T-cell (primary cell): ENCODE measurements at regions of chr7 and their contacts with region 1.

Region 1: GRCh38 chr7:43582503-43583423 is at the start of gene STK17A:
- DNase-seq: peak; percentile 87 to 98 (median 93)
- ATAC-seq: peak; percentile 70 to 87 (median 80)
- H3K4me3 ChIP-seq: peak within 1 kb of the TSS; percentile 94 to 96
- H3K4me3 Mint-ChIP-seq: peak within 1 kb of the TSS; percentile 96 to 99 (median 98)
- H3K27ac ChIP-seq: peak within 1 kb of the TSS; percentile 95
- H3K27ac Mint-ChIP-seq: peak within 1 kb of the TSS; percentile 95 to 98
- H3K4me1 ChIP-seq: peaks cover 4 to 12% of the 10 kb centered on the region in 2 experiments
- H3K4me1 Mint-ChIP-seq: peaks cover 14 to 40% (median 26%) of the 10 kb centered on the region in 3 donors
- H3K27me3 ChIP-seq: no peaks in the 10 kb centered on the region
- H3K27me3 Mint-ChIP-seq: peaks cover 0 to 5% of the 10 kb centered on the region in 2 donors
- total RNA-seq, gene STK17A: 101 to 120 (median 117) TPM

Region 2: GRCh38 chr7:43449577-43449976 is 133.2 kb before region 1 on chr7:
- CTCF ChIA-PET with region 1: no interaction called
- POLR2A ChIA-PET with region 1: no interaction called
- DNase-seq: no peak
- ATAC-seq: no peak
- H3K4me3 ChIP-seq: no peak overlapping the region
- H3K4me3 Mint-ChIP-seq: no peak overlapping the region
- H3K27ac ChIP-seq: no peak overlapping the region
- H3K27ac Mint-ChIP-seq: no peak overlapping the region
- H3K4me1 ChIP-seq: no peaks in the 10 kb centered on the region
- H3K4me1 Mint-ChIP-seq: no peaks in the 10 kb centered on the region
- H3K27me3 ChIP-seq: peaks cover 0 to 4% of the 10 kb centered on the region in 2 experiments
- H3K27me3 Mint-ChIP-seq: peaks cover 3 to 5% of the 10 kb centered on the region in 2 donors

Region 3: DNA sequence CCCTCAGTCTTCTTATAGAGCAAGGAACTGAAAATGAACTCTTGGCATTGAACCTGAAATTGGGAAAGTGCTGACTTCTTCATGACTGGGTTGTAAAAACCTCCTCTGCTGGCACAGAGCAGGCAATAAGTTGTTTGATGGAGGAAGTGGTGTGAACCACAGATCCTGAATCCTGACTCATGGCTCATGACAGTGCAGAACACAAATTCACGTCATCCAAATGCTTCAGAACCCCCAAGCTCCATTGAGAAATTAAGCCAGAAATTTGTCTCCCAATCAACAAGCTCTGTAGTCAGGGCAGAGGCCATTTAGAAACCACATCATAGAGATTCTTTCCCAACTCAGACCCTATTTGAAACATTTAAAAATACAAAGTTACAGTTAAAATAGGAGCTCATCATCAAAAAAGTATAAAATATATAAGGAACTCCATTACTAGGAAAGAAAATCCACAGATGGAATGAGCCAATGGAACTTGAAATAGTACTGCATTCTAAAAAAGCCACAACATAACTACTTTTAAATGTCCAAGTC is 10.2 kb before region 1 on chr7:
- CTCF ChIA-PET with region 1: interaction called, 4 to 14 read pairs
- POLR2A ChIA-PET with region 1: interaction called in 1 of 2 experiments, 7 read pairs
- DNase-seq: peak in 4 of 35 experiments; percentile 10 to 35 (median 24)
- ATAC-seq: peak; percentile 74 to 89 (median 80)
- H3K4me3 ChIP-seq: no peak overlapping the region
- H3K4me3 Mint-ChIP-seq: no peak overlapping the region
- H3K27ac ChIP-seq: no peak overlapping the region
- H3K27ac Mint-ChIP-seq: peak overlapping the region in 1 of 2 donors; percentile 8
- H3K4me1 ChIP-seq: peaks cover 0 to 2% of the 10 kb centered on the region in 2 experiments
- H3K4me1 Mint-ChIP-seq: peaks cover 2 to 7% (median 6%) of the 10 kb centered on the region in 3 donors
- H3K27me3 ChIP-seq: no peaks in the 10 kb centered on the region
- H3K27me3 Mint-ChIP-seq: no peaks in the 10 kb centered on the region

Region 4: DNA sequence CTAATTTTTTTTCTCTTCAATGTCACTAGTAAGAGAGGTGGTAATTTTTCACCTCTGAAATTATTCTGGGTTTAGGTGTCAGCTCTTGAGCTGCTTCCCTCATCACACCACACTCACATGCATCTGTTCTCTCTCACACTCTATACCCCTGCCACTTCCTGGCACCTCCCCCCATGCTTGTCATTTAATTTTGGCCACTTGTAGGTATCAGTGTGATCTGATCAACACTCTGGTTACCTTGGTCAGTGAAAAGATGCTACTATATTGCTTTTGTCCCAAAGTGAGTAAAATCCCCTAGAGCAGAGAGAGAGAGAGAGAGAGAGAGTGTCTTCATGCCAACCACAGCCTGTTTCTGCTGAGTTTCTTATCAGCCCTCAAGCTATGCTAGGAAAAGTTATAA is 42.7 kb after region 1 on chr7:
- CTCF ChIA-PET with region 1: interaction called, 5 to 63 read pairs
- POLR2A ChIA-PET with region 1: interaction called, 9 to 25 read pairs
- DNase-seq: peak in 33 of 35 experiments; percentile 33 to 83 (median 69)
- ATAC-seq: peak; percentile 64 to 74 (median 73)
- H3K4me3 ChIP-seq: no peak overlapping the region
- H3K4me3 Mint-ChIP-seq: peak overlapping the region; percentile 29 to 55 (median 52)
- H3K27ac ChIP-seq: peak overlapping the region; percentile 76
- H3K27ac Mint-ChIP-seq: peak overlapping the region; percentile 85 to 87
- H3K4me1 ChIP-seq: peaks cover 45 to 82% of the 10 kb centered on the region in 2 experiments
- H3K4me1 Mint-ChIP-seq: peaks cover 62 to 91% (median 91%) of the 10 kb centered on the region in 3 donors
- H3K27me3 ChIP-seq: no peaks in the 10 kb centered on the region
- H3K27me3 Mint-ChIP-seq: no peaks in the 10 kb centered on the region

Region 5: GRCh38 chr7:43669286-43670081 is 86.7 kb after region 1 on chr7:
- CTCF ChIA-PET with region 1: interaction called, 7 to 23 read pairs
- POLR2A ChIA-PET with region 1: interaction called, 7 to 15 read pairs
- DNase-seq: peak in 34 of 35 experiments; percentile 48 to 82 (median 64)
- ATAC-seq: peak; percentile 68 to 87 (median 74)
- H3K4me3 ChIP-seq: peak overlapping the region in 1 of 2 donors; percentile 22
- H3K4me3 Mint-ChIP-seq: peak overlapping the region; percentile 56 to 77 (median 73)
- H3K27ac ChIP-seq: peak overlapping the region; percentile 79
- H3K27ac Mint-ChIP-seq: peak overlapping the region; percentile 87 to 95
- H3K4me1 ChIP-seq: peaks cover 18 to 20% of the 10 kb centered on the region in 2 experiments
- H3K4me1 Mint-ChIP-seq: peaks cover 83 to 85% (median 85%) of the 10 kb centered on the region in 3 donors
- H3K27me3 ChIP-seq: no peaks in the 10 kb centered on the region
- H3K27me3 Mint-ChIP-seq: no peaks in the 10 kb centered on the region

Region 6: GRCh38 chr7:43721193-43721806 is 138.5 kb after region 1 on chr7:
- CTCF ChIA-PET with region 1: interaction called, 23 to 86 read pairs
- POLR2A ChIA-PET with region 1: interaction called, 6 to 14 read pairs
- DNase-seq: peak in 5 of 35 experiments; percentile 2 to 80 (median 15)
- ATAC-seq: peak in 1 of 4 experiments; percentile 31
- H3K4me3 ChIP-seq: no peak overlapping the region
- H3K4me3 Mint-ChIP-seq: no peak overlapping the region
- H3K27ac ChIP-seq: no peak overlapping the region
- H3K27ac Mint-ChIP-seq: peak overlapping the region in 1 of 2 donors; percentile 56
- H3K4me1 ChIP-seq: peaks cover 2 to 4% of the 10 kb centered on the region in 2 experiments
- H3K4me1 Mint-ChIP-seq: peaks cover 53 to 59% (median 53%) of the 10 kb centered on the region in 3 donors
- H3K27me3 ChIP-seq: no peaks in the 10 kb centered on the region
- H3K27me3 Mint-ChIP-seq: no peaks in the 10 kb centered on the region

Region 7: DNA sequence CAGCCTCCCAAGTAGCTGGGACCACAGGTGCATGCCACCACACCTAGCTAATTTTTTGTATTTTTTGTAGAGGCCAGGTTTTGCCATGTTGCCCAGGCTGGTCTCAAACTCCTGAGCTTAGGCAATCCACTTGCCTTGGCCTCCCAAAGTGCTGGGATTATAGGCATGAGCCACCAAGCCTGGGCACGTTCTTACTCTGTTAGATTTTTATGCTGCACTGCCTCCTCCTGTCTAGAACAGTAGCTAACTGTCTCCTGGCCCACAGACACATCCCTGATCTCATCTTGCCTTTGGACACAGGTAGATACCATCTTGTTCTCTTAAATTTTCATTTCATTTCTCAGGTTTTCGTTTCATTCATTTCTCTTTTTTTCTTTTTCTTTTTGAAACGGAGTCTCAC is 216.8 kb after region 1 on chr7:
- CTCF ChIA-PET with region 1: interaction called, 4 to 10 read pairs
- POLR2A ChIA-PET with region 1: no interaction called
- DNase-seq: no peak
- ATAC-seq: peak in 1 of 4 experiments; percentile 43
- H3K4me3 ChIP-seq: no peak overlapping the region
- H3K4me3 Mint-ChIP-seq: no peak overlapping the region
- H3K27ac ChIP-seq: no peak overlapping the region
- H3K27ac Mint-ChIP-seq: no peak overlapping the region
- H3K4me1 ChIP-seq: no peaks in the 10 kb centered on the region
- H3K4me1 Mint-ChIP-seq: no peaks in the 10 kb centered on the region
- H3K27me3 ChIP-seq: no peaks in the 10 kb centered on the region
- H3K27me3 Mint-ChIP-seq: no peaks in the 10 kb centered on the region

Region 8: GRCh38 chr7:44059219-44060090 is 476.7 kb after region 1 on chr7:
- CTCF ChIA-PET with region 1: no interaction called
- POLR2A ChIA-PET with region 1: no interaction called
- DNase-seq: peak in 5 of 35 experiments; percentile 1 to 49 (median 22)
- ATAC-seq: peak in 3 of 4 experiments; percentile 31 to 73 (median 42)
- H3K4me3 ChIP-seq: no peak overlapping the region
- H3K4me3 Mint-ChIP-seq: peak overlapping the region in 1 of 3 donors; percentile 17
- H3K27ac ChIP-seq: no peak overlapping the region
- H3K27ac Mint-ChIP-seq: peak overlapping the region; percentile 5 to 34
- H3K4me1 ChIP-seq: peaks cover 0 to 37% of the 10 kb centered on the region in 2 experiments
- H3K4me1 Mint-ChIP-seq: peaks cover 27 to 31% (median 28%) of the 10 kb centered on the region in 3 donors
- H3K27me3 ChIP-seq: no peaks in the 10 kb centered on the region
- H3K27me3 Mint-ChIP-seq: no peaks in the 10 kb centered on the region